Calu3 (cell line): ENCODE measurements at regions of chr5 and their contacts with region 1.

Region 1: GRCh38 chr5:78638423-78638822 is 10.1 kb downstream of the LHFPL2 start:
- DNase-seq: peak; percentile 83
- H3K4me3 Mint-ChIP-seq: peak overlapping the region; percentile 21
- H3K27ac Mint-ChIP-seq: peak overlapping the region; percentile 57
- H3K4me1 Mint-ChIP-seq: peaks cover 76% of the 10 kb centered on the region
- H3K27me3 Mint-ChIP-seq: no peaks in the 10 kb centered on the region
- CTCF ChIP-seq: no peak

Region 2: GRCh38 chr5:78509884-78510769 is 128.3 kb before region 1 on chr5:
- CTCF ChIA-PET with region 1: no interaction called
- intact Hi-C with region 1: no loop called
- DNase-seq: peak; percentile 60
- H3K4me3 Mint-ChIP-seq: peak overlapping the region; percentile 43
- H3K27ac Mint-ChIP-seq: no peak overlapping the region
- H3K4me1 Mint-ChIP-seq: peaks cover 67% of the 10 kb centered on the region
- H3K27me3 Mint-ChIP-seq: no peaks in the 10 kb centered on the region
- CTCF ChIP-seq: no peak

Region 3: DNA sequence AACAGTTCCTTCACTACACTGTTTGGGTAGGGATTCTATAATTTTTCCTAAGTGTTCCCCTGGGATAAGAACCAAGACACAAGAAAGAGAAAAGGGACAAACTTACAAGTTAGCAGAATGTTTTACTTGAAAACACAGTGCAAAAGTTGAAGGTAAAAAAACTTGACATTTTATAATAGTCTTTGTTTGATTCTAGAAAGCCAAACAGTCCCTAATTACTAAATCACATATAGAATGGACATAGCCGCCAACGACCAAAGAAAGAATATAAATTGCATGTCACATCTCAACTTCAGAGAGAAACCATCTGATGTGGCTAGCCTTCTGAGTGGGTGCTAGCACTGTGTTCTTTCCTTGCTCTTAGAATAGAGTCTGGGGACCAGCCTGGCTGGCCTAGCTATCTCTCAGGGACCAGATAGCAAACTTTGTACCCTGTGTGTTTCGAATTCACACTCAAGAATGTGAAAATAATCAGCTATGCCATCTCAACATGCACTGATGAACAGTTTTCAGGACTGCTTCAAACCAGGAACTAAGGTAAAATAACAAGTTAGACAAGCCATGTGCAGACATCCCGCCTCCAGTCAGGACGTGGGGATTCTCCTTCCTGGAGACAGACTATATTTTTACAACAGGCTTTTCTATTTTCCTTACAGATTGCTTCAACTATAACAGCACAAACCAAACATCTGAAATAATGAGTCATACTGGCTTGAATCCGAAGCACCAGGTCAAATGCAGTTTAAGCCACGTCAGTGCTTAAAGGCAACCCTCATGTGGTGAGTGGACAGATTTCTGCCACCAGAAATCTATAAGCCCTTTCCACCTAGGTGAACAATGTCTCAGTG is 43.6 kb before region 1 on chr5:
- CTCF ChIA-PET with region 1: interaction called, 3 read pairs
- intact Hi-C with region 1: loop called (anchors 5 kb)
- DNase-seq: peak; percentile 71
- H3K4me3 Mint-ChIP-seq: peak overlapping the region; percentile 21
- H3K27ac Mint-ChIP-seq: peak overlapping the region; percentile 96
- H3K4me1 Mint-ChIP-seq: peaks cover 83% of the 10 kb centered on the region
- H3K27me3 Mint-ChIP-seq: no peaks in the 10 kb centered on the region
- CTCF ChIP-seq: no peak

Region 4: GRCh38 chr5:78886341-78887230 is 248.2 kb after region 1 on chr5:
- CTCF ChIA-PET with region 1: no interaction called
- intact Hi-C with region 1: loop called (anchors 5 kb)
- DNase-seq: no peak
- H3K4me3 Mint-ChIP-seq: no peak overlapping the region
- H3K27ac Mint-ChIP-seq: no peak overlapping the region
- H3K4me1 Mint-ChIP-seq: no peaks in the 10 kb centered on the region
- H3K27me3 Mint-ChIP-seq: no peaks in the 10 kb centered on the region
- CTCF ChIP-seq: peak; percentile 74